ENCODE measurements at regions of chr14 and their contacts with region 1.

Region 1: DNA sequence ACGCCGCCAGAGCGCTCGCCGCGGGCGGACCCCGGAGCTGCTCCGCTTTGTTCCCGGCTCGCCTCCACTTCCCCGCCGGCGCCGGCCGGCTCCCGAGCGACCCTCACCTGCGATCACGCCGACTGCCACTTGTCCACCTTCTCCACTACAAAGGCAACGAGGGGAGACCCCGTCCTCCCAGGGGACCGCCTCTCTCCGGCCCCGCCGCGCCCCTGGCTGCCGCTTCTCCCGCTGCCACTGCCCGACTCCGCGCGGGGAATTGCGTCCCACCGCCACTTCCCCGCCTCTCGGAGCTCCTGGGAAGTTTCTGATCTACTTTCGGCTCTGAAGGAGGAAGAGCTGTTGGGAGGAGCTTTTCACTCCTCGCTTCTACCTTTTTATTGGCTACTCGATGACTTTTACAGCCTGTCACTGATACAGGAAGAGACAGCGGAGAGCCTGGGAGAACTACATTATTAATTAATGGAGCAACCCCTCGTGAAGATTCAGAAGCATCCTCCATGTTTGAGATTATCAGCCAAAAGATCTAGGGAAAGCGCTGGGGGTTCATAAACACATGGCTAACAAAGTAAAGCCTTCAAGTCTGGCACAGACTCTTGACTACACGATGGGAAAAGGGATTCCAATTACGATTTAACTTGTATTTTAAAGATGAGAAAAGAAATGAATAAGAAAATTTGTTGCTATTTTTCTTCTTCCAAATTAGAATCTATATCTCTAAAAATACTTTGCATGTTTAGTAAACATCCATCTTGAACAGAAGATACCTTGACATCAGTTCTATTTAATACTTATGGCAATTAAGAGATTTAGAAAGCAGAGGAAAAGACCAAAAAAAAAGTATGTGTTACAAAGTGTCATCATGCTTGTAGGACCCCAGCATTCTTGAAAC is at the start of gene BAZ1A:
- H3K4me3 Mint-ChIP-seq: peak within 1 kb of the TSS; percentile 99
- H3K27ac Mint-ChIP-seq: peak within 1 kb of the TSS; percentile 100
- H3K4me1 Mint-ChIP-seq: peaks cover 15% of the 10 kb centered on the region
- H3K27me3 Mint-ChIP-seq: no peaks in the 10 kb centered on the region

Region 2: DNA sequence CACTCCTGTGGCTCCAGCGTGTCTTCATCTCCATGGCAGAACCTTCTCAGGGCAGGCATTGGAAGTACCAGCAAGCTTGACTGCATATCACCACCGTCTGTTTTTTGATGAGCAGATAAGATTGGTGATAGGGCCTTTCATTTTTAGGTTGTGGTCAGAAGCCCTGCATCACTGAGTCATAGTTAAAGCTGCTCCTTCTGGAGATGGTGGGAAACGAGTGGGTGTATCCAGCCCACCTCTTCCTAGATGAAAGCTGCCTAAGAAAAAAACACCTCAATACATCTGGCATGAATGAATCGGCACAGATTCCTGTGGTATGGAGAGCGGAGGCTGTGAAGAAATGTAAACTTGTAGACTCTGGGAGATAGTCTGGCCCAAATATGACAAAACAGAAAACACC is 675.7 kb before region 1 on chr14:
- intact Hi-C with region 1: no loop called
- H3K4me3 Mint-ChIP-seq: no peak overlapping the region
- H3K27ac Mint-ChIP-seq: no peak overlapping the region
- H3K4me1 Mint-ChIP-seq: no peaks in the 10 kb centered on the region
- H3K27me3 Mint-ChIP-seq: peaks cover 45% of the 10 kb centered on the region

Region 3: DNA sequence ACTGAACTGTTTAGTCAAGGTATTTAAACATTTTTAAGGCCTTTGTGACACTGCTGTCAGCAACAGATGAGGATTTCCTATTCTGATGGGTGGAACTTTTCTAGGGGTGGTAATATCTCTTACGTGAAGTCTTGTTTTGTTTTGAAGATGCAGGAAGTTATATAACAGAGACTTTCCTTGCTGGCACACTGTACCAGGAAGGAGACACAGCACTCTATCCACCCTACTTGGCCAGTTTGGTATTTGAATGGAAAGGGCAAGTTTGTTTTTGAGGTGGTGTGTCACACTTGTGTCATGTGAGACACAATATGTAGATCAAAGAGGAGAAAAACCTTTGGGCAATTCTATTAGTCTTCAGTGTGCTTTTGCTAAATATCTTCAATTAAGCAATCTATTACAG is 55.9 kb after region 1 on chr14:
- intact Hi-C with region 1: loop called (anchors 10 kb)
- H3K4me3 Mint-ChIP-seq: no peak overlapping the region
- H3K27ac Mint-ChIP-seq: peak overlapping the region; percentile 82
- H3K4me1 Mint-ChIP-seq: peaks cover 23% of the 10 kb centered on the region
- H3K27me3 Mint-ChIP-seq: no peaks in the 10 kb centered on the region

Region 4: GRCh38 chr14:34982417-34983147 is 107.3 kb after region 1 on chr14 and contains the start of gene SRP54:
- intact Hi-C with region 1: loop called (anchors 1 kb)
- H3K4me3 Mint-ChIP-seq: no peak within 1 kb of the TSS
- H3K27ac Mint-ChIP-seq: no peak within 1 kb of the TSS
- H3K4me1 Mint-ChIP-seq: no peaks in the 10 kb centered on the region
- H3K27me3 Mint-ChIP-seq: no peaks in the 10 kb centered on the region

Region 5: DNA sequence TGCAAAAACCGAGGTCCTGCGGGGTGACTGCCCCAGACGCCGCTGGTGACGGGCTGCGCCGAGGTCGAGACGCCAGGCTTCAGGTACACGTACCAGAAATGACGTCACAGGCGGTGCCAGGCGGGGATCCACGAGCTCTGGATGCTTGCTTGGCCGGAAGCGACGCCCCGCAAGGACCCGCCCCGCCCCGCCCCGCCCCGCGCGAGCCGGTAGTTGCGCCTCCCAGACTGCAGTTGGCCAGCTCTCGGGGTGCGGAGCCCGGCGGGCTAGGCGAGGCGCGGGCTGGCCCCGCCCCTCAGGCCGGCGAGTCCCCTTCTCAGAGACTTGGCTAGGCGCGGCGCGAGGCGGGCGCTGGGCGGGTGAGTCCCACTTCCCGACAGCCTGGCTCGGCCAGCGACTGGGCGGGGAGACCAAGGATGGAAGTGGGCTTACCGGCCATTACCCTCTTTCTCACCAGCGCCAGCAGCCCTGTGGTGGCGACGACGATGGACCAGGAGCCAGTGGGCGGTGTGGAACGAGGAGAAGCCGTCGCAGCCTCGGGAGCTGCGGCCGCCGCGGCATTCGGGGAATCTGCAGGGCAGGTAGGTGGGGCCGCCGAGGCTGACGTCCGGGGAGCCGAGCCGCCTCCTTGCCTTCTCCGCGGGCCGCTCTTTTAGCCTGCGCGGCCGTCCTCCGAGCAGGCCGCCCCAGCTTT is 170.9 kb after region 1 on chr14 and contains the start of gene FAM177A1:
- intact Hi-C with region 1: loop called (anchors 2 kb)
- H3K4me3 Mint-ChIP-seq: peak within 1 kb of the TSS; percentile 99
- H3K27ac Mint-ChIP-seq: peak within 1 kb of the TSS; percentile 98
- H3K4me1 Mint-ChIP-seq: peaks cover 38% of the 10 kb centered on the region
- H3K27me3 Mint-ChIP-seq: no peaks in the 10 kb centered on the region

Region 6: DNA sequence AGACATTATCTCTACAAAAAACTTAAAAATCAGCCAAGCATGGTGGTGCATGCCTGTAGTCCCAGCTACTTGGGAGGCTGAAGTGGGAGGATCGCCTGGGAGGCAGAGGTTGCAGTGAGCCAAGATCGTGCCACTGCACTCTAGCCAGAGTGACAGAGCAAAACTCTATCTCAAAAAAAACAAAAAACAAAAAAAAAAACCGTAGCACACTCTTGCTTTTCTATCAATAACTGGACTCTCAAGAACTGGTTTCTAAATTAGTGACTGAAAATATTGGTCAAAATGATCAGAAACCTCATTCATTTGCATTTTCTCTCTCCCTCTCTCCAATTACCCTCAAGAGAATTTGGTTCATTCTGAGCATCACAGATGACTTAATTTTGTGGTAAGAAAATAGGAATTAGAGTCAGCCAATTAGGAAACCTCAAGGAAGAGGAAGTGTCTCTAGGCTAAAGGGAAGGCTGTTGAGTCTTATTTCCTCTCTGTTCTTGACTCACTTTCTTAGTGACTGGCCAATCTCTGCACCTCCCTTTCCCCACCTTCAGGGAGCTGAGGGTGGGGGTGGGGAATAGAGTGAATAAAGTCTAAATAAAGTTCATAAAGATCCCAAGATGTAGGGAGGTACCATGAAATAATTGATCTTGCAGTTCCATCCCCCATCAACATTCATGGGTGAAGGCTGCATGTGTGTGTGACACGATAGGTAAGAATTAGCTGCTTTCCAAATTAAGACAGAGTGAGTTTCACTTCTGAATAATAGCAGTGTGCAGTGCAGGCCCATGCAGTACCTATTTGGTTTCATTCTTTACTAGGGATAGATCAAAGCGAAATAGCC is 410.1 kb after region 1 on chr14:
- intact Hi-C with region 1: loop called (anchors 5 kb)
- H3K4me3 Mint-ChIP-seq: peak overlapping the region; percentile 30
- H3K27ac Mint-ChIP-seq: peak overlapping the region; percentile 78
- H3K4me1 Mint-ChIP-seq: peaks cover 55% of the 10 kb centered on the region
- H3K27me3 Mint-ChIP-seq: no peaks in the 10 kb centered on the region